Gastrocnemius medialis (tissue), 4 donors: ENCODE measurements at regions of chrX and their contacts with region 1.

Region 1: DNA sequence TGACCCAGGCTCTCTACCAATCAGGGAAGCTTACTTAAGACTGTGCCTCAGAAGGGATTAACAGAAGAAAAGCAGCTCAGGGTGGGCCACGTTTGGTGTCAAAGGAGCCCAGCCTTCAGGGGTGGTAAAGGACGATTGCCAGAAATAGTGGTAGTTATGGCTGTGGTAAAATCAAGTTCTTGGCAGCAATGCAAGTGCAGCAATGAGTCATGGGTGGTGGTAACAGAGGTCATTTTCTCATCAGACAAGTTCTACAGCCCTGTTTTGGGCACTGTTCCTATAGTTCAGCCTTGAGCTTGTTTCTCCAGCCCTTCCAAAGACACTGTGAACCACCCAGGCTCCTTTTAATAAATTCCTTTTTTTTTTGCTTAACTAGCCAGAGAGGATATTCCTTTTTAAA is 120.3 kb downstream of the EFHC2 start:
- DNase-seq: no peak
- ATAC-seq: no peak
- H3K4me3 ChIP-seq: no peak overlapping the region
- H3K27ac ChIP-seq: no peak overlapping the region
- H3K4me1 ChIP-seq: no peaks in the 10 kb centered on the region
- H3K27me3 ChIP-seq: no peaks in the 10 kb centered on the region
- CTCF ChIP-seq: no peak
- POLR2A ChIP-seq: no peak

Region 2: GRCh38 chrX:44105228-44105914 is 117.8 kb before region 1 on chrX:
- in situ Hi-C with region 1: loop called in 1 of 4 experiments (anchors 25 kb)
- intact Hi-C with region 1: no loop called
- DNase-seq: no peak
- ATAC-seq: no peak
- H3K4me3 ChIP-seq: no peak overlapping the region
- H3K27ac ChIP-seq: no peak overlapping the region
- H3K4me1 ChIP-seq: no peaks in the 10 kb centered on the region
- H3K27me3 ChIP-seq: peaks cover 0 to 4% (median 0%) of the 10 kb centered on the region in 3 donors
- CTCF ChIP-seq: no peak
- POLR2A ChIP-seq: no peak

Region 3: DNA sequence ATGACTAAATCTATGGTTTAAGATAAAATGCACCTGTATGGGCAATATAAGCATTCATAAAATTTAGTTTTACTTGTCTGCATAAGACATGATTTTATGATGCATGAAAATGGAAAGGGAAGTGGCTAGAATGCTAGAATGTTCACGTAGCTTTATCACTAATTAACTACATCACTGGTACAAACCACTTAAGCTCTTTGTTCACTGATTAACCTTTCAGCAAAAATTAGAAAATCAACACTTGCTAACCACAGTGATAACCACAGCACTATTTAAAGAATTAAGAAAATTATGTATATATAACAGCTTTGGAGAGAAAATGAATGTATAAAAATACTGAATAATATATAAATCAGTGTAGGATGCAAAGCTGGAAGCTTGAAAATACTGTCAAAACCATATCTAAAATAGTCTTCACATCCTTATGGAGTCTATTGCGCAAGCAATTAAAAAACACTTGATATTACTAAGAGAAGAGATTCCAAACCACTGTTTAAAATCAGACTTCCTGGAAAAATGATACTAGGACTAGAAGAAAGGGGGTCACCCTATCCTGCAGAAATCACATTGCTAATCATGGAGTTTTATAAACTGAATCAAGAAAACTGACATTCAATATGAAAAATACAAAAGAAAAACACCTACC is 68.4 kb after region 1 on chrX:
- in situ Hi-C with region 1: no loop called
- intact Hi-C with region 1: no loop called
- DNase-seq: no peak
- ATAC-seq: no peak
- H3K4me3 ChIP-seq: no peak overlapping the region
- H3K27ac ChIP-seq: no peak overlapping the region
- H3K4me1 ChIP-seq: no peaks in the 10 kb centered on the region
- H3K27me3 ChIP-seq: no peaks in the 10 kb centered on the region
- CTCF ChIP-seq: no peak
- POLR2A ChIP-seq: no peak